ENCODE measurements at regions of chr10 and their contacts with region 1.

Region 1: DNA sequence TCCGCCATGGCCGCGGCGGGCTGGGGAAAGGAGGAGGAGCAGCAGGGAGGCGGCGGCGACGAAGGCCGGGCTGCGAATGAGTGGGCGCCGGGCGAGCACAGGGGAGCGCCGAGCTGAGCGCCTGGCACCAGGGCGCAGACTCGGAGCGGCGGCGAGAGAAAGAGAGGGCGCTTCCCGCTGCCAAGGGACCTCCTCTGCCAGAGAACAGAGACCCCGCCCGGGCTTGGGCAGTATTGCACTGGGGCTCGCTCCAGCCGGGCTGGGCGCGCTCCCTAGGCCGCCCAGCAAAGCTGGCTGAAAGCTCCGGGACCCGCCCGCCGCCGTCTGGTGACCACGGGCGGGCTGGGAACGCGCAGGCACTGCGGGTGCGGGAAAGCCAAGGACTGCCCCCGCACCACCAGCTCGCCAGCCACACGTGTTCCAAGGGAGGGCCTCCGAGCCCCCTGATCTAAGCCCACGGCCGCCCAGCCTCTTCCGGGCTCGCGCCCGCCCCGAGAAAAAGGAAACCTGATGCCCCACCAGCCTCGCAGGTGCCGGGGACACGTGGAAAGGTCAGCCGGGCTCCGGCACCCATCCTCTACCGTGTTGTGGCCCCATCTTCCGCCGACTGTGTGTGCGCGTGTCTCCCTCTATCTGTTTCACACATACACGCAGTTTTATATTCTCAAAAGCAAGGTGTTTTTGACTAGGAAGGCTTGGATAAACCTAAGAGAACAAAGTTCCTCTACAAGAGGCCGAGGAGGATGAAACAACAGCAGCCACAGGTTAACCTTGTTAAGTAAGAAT is at the start of gene CCDC6:
- DNase-seq: peak; percentile 86
- H3K4me3 Mint-ChIP-seq: peak within 1 kb of the TSS; percentile 94
- H3K27ac Mint-ChIP-seq: peak within 1 kb of the TSS; percentile 94
- H3K4me1 Mint-ChIP-seq: peaks cover 51% of the 10 kb centered on the region
- H3K27me3 Mint-ChIP-seq: no peaks in the 10 kb centered on the region
- total RNA-seq, gene CCDC6: 61.5 and 63.1 TPM in 2 replicates

Region 2: DNA sequence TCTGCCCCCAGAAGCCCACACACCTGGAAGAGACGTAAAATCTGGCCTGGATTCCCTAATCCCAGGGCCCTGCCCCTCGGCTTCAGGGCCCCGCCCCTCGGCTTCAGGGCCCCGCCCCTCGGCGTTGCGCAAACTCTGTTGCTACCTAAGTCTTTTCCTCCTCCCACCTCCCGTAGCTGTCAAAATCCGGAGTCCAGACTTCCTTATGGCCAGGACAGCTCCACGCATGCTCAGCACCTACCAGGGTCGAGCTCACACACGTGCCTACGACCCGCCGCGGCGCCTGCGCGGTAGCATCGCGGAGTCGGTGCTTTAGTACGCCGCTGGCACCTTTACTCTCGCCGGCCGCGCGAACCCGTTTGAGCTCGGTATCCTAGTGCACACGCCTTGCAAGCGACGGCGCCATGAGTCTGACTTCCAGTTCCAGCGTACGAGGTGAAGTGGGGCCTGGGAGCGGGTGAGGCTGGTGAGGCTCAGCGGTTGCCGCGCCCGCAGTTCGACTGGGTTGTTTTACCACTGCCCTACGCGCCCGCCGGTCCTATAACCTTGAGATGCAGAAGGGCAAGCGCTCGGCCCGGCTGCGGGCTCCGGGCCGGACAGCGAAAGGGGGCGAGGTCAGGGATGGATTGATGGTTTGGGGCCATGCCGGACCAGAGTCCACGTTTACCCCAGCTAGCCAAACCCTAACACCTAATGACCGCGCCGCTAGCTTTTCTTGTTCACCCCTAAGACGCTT is 1637.6 kb before region 1 on chr10 and contains the start of gene CISD1:
- intact Hi-C with region 1: loop called (anchors 10 kb)
- DNase-seq: peak; percentile 94
- H3K4me3 Mint-ChIP-seq: peak within 1 kb of the TSS; percentile 90
- H3K27ac Mint-ChIP-seq: peak within 1 kb of the TSS; percentile 95
- H3K4me1 Mint-ChIP-seq: peaks cover 20% of the 10 kb centered on the region
- H3K27me3 Mint-ChIP-seq: no peaks in the 10 kb centered on the region
- total RNA-seq, gene CISD1: 39.7 and 43.2 TPM in 2 replicates

Region 3: DNA sequence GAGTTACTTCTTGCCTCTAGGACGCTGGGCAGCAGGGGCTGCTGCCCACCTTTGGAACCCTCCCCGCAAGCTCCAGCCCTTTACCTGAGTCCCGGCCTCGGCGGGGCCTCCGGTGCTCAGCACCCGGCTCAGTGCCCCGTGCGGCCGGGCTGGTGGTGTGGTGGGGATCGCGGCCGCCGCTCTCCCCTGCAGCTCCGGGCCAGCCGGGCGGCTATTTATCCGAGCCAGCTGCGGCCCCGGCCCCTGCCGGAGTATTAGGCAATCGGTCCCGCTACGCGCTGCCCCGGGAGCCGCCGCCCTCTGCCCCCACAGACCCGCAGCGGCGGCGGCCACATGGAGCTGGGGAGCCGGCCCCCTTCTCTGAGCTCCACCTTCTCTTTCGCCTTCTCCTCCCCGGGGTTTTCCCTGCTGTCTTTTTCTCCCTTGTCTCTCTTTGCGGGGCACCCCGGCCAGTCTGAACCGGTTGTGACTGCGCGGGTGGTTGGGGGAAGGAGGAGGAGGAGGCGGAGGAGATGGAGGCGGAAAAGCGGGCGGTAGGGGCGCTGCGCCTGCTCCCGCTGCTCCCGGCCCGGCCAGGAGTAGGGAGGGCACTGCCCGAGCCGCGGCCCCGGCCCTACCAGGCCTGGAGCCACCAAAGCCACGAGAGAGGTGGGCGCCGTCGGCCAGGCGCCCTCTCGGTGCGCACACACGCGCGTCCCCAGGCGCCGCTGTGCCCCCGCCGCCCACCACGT is 197.1 kb before region 1 on chr10 and contains the start of gene SLC16A9:
- intact Hi-C with region 1: loop called (anchors 2 kb)
- DNase-seq: peak; percentile 52
- H3K4me3 Mint-ChIP-seq: peak within 1 kb of the TSS; percentile 73
- H3K27ac Mint-ChIP-seq: peak within 1 kb of the TSS; percentile 24
- H3K4me1 Mint-ChIP-seq: peaks cover 3% of the 10 kb centered on the region
- H3K27me3 Mint-ChIP-seq: peaks cover 62% of the 10 kb centered on the region
- total RNA-seq, gene SLC16A9: 1.9 and 2.1 TPM in 2 replicates

Region 4: GRCh38 chr10:59865101-59865500 is 41.5 kb before region 1 on chr10:
- intact Hi-C with region 1: loop called (anchors 1 kb)
- DNase-seq: no peak
- H3K4me3 Mint-ChIP-seq: no peak overlapping the region
- H3K27ac Mint-ChIP-seq: no peak overlapping the region
- H3K4me1 Mint-ChIP-seq: peaks cover 41% of the 10 kb centered on the region
- H3K27me3 Mint-ChIP-seq: no peaks in the 10 kb centered on the region

Region 5: DNA sequence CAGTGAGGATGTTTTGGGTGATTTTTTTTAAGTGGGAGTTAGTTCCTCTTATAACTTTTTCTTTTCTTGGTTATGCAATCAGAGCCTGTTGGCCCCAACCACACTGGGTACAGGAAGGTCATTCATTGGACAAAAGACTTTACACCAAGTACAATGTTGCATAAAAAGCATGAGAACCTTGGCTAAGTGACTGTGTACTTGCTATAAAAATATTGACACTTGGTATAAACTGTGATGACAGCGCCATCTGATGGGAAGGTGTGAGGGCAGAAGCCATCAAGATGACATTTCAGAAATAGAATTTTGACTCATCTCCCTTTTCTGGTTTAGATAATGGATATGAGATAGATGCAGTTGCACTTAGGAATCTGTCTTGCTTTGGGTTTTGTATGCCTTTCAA is 126.1 kb after region 1 on chr10:
- intact Hi-C with region 1: loop called (anchors 1 kb)
- DNase-seq: peak; percentile 20
- H3K4me3 Mint-ChIP-seq: no peak overlapping the region
- H3K27ac Mint-ChIP-seq: no peak overlapping the region
- H3K4me1 Mint-ChIP-seq: peaks cover 14% of the 10 kb centered on the region
- H3K27me3 Mint-ChIP-seq: no peaks in the 10 kb centered on the region

Region 6: GRCh38 chr10:60536529-60537114 is 630.0 kb after region 1 on chr10:
- intact Hi-C with region 1: loop called (anchors 5 kb)
- DNase-seq: no peak
- H3K4me3 Mint-ChIP-seq: no peak overlapping the region
- H3K27ac Mint-ChIP-seq: peak overlapping the region; percentile 17
- H3K4me1 Mint-ChIP-seq: peaks cover 37% of the 10 kb centered on the region
- H3K27me3 Mint-ChIP-seq: no peaks in the 10 kb centered on the region